Activated CD4-positive, alpha-beta T cell treated with anti-CD3 and anti-CD28 coated beads, Interleukin-2, amount 10 ng/mL, durations not matched to agents 7 days and 5 days (primary cell): ENCODE measurements at regions of chr16 and their contacts with region 1.

Region 1: DNA sequence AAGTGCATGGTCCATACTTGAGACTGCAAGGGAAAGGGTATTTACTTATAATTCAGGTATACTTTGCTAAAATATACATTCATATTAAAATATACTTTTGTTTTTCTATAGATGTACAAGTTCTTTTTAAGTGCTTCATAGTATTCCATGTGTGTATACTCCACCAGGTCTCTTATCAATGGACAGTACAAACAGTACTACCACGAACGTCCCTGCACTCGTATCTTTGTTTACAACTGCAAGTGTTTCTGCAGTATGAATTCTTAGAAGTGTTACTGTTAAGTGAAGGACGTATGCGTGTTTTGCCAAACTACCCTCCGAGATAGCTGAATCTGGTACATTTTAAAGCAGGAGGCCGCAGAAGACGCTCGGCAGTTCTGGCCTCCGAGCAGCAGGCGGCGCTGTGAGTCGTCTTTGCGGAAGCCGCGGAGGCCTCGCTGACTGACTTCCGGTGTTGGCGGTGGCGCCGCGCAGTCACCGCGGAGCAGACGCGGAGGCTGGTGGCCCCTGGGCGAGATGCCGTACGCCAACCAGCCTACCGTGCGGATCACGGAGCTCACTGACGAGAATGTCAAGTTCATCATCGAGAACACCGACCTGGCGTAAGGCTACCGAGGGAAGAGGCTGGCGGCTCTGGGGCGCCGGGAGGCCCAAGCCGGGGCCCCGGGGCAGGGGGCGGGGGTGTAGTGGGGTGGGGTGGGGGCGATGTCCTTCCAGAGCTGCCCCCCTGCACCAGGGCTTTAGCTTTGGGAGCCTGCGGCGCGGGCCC is at the start of gene POLR2C:
- DNase-seq: peak; percentile 93
- H3K4me3 Mint-ChIP-seq: peak within 1 kb of the TSS; percentile 99
- H3K27ac Mint-ChIP-seq: peak within 1 kb of the TSS; percentile 98
- H3K4me1 Mint-ChIP-seq: peaks cover 32% of the 10 kb centered on the region
- H3K27me3 Mint-ChIP-seq: no peaks in the 10 kb centered on the region
- total RNA-seq, gene POLR2C: 54.0 to 55.0 TPM

Region 2: GRCh38 chr16:57447186-57447962 is 15.0 kb before region 1 on chr16 and contains the starts of genes CIAPIN1 and COQ9:
- CTCF ChIA-PET with region 1: interaction called, 40 read pairs
- POLR2A ChIA-PET with region 1: interaction called, 3 read pairs
- DNase-seq: peak; percentile 95
- H3K4me3 Mint-ChIP-seq: peak within 1 kb of the TSS; percentile 93
- H3K27ac Mint-ChIP-seq: peak within 1 kb of the TSS; percentile 90
- H3K4me1 Mint-ChIP-seq: peaks cover 36% of the 10 kb centered on the region
- H3K27me3 Mint-ChIP-seq: no peaks in the 10 kb centered on the region
- total RNA-seq, gene CIAPIN1: 45.8 to 61.8 TPM
- total RNA-seq, gene COQ9: 39.8 to 41.1 TPM

Region 3: GRCh38 chr16:57475711-57476339 is 13.4 kb after region 1 on chr16:
- CTCF ChIA-PET with region 1: interaction called, 20 read pairs
- POLR2A ChIA-PET with region 1: no interaction called
- DNase-seq: peak; percentile 85
- H3K4me3 Mint-ChIP-seq: no peak overlapping the region
- H3K27ac Mint-ChIP-seq: peak overlapping the region; percentile 20
- H3K4me1 Mint-ChIP-seq: peaks cover 24% of the 10 kb centered on the region
- H3K27me3 Mint-ChIP-seq: no peaks in the 10 kb centered on the region

Region 4: DNA sequence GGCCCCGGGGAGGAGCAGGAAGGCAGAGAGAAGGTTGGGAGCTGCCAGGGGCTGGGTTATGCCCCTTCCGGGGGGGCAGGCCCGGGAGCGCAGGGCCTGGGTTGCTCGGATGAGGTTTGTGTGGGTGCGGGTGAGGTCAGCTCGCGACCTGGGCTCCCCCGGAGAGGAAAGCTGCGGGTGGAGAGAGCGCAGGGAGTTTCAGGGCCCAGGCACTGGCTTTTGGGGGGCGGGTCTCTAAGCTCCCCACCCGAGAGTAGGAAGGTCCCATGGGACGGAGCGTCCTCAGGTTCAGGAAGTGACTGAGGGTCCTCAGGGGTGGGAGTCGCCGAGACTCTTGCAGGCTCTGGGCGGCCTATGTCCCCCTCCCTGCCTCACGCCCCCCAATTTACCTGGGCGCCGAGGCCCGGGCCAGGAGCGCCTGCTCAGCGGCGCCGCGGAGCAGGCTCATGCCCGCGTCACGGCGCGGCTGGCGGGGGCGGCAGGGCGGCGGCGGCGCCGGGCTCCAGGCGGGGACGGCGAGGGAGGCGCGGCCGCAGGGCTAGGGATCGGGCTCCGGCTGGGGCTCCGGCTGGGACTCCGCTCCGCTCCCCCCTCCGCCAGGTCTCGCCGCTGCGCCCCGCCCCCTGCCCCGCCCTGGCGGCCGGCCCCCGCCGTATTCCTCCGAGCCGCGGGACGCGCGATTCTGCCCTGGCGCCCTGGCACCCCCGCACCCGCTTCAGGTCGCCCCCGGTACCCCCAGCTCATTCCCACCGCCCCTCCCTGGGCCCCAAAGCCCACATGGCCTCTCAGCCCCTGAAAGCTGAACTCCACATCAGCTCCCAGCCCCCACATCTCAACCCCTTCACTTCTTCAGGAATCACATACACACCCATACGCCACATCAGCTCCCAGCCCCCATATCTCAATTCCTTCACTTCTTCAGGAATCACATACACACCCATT is 23.8 kb after region 1 on chr16 and contains the start of gene DOK4:
- CTCF ChIA-PET with region 1: interaction called, 14 read pairs
- POLR2A ChIA-PET with region 1: no interaction called
- DNase-seq: peak; percentile 75
- H3K4me3 Mint-ChIP-seq: peak within 1 kb of the TSS; percentile 76
- H3K27ac Mint-ChIP-seq: peak within 1 kb of the TSS; percentile 72
- H3K4me1 Mint-ChIP-seq: peaks cover 17% of the 10 kb centered on the region
- H3K27me3 Mint-ChIP-seq: no peaks in the 10 kb centered on the region
- total RNA-seq, gene DOK4: 2.3 to 2.7 TPM